GM10248 (cell line): ENCODE measurements at regions of chr15 and their contacts with region 1.

Region 1: GRCh38 chr15:101269479-101270223 is 7.6 kb downstream of the SELENOS start:
- DNase-seq: no peak
- CTCF ChIP-seq: peak; percentile 38

Region 2: GRCh38 chr15:101424984-101425383 is 155.3 kb after region 1 on chr15:
- CTCF ChIA-PET with region 1: no interaction called
- POLR2A ChIA-PET with region 1: interaction called, 11 read pairs
- DNase-seq: no peak
- CTCF ChIP-seq: no peak